ENCODE measurements at regions of chr11 and their contacts with region 1.

Region 1: DNA sequence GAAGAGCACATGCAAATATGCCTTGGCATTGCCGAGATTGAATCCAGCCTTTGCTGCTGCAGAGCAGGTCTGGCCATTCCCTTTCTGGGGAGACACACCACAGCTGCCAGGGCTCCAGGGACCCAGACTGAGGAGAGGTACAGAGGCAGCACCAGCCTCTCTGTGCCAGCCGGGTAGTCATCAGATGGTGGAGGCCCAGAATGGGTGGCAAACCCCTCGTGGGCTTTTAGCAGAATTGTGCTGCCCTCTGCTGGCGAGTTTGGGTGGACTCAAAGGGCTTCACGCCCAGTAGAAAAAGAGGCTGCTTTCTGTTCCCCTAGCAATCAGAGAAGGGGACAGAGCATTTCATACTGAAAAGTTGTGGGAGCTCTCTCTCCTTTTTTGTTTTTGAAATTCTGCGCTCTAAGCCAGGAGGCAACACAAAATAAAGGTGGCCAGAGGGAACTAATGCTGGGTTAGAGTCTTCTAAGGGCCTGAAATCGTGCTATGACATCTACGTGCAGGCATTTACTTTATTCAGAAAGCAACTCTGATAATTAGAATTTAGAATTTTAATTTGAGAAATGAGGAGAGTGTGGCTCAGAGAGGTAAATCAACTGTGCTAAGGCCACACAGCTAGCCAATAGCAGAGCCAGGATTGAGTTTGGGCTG is 158.8 kb upstream of the NAV2 start:
- DNase-seq: peak; percentile 88
- H3K4me3 ChIP-seq: no peak overlapping the region
- H3K27ac ChIP-seq: no peak overlapping the region
- H3K4me1 ChIP-seq: no peaks in the 10 kb centered on the region
- H3K27me3 ChIP-seq: no peaks in the 10 kb centered on the region
- CTCF ChIP-seq: peak; percentile 80 to 84 (median 84)
- POLR2A ChIP-seq: no peak

Region 2: GRCh38 chr11:19071255-19071654 is 482.6 kb before region 1 on chr11:
- intact Hi-C with region 1: loop called (anchors 10 kb)
- DNase-seq: peak; percentile 79
- H3K4me3 ChIP-seq: no peak overlapping the region
- H3K27ac ChIP-seq: no peak overlapping the region
- H3K4me1 ChIP-seq: no peaks in the 10 kb centered on the region
- H3K27me3 ChIP-seq: no peaks in the 10 kb centered on the region
- CTCF ChIP-seq: peak; percentile 83 to 88 (median 85)
- POLR2A ChIP-seq: no peak

Region 3: DNA sequence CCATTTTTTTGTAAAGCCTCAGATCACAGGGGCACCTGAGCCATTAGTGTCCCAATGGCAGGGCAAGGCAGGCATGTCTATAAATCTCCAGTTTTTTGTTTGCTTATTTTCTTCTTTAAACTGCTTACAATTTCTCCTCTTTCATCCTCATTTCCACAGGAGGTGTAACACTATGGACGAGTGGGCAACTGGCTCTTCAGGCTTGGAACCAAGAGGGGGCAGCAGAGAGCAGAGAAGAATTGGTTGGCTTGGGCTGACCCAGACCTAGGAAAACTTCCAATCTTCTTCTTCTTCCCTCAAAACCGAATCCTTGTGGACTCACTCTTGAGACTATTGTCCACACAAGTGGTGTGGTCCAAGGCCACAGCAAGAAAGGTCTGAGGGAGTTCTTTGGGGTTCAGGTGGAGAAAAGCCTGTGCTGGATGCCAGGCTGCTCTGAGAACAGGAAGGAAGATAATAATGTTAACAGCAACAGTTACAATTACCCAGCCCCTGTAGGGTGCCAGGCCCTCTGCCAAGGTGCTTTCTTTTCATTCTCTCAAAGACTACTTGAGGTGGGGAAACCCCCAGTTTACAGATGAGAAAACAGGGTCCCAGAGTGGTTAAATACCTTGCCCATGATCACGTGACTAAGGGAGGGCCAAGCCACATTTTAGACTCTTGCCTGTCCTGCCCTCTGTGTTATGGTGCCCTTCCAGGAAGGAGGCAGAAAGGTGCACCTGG is 242.3 kb before region 1 on chr11:
- intact Hi-C with region 1: loop called (anchors 10 kb)
- DNase-seq: peak; percentile 87
- H3K4me3 ChIP-seq: no peak overlapping the region
- H3K27ac ChIP-seq: no peak overlapping the region
- H3K4me1 ChIP-seq: no peaks in the 10 kb centered on the region
- H3K27me3 ChIP-seq: no peaks in the 10 kb centered on the region
- CTCF ChIP-seq: peak; percentile 61 to 84 (median 75)
- POLR2A ChIP-seq: no peak

Region 4: DNA sequence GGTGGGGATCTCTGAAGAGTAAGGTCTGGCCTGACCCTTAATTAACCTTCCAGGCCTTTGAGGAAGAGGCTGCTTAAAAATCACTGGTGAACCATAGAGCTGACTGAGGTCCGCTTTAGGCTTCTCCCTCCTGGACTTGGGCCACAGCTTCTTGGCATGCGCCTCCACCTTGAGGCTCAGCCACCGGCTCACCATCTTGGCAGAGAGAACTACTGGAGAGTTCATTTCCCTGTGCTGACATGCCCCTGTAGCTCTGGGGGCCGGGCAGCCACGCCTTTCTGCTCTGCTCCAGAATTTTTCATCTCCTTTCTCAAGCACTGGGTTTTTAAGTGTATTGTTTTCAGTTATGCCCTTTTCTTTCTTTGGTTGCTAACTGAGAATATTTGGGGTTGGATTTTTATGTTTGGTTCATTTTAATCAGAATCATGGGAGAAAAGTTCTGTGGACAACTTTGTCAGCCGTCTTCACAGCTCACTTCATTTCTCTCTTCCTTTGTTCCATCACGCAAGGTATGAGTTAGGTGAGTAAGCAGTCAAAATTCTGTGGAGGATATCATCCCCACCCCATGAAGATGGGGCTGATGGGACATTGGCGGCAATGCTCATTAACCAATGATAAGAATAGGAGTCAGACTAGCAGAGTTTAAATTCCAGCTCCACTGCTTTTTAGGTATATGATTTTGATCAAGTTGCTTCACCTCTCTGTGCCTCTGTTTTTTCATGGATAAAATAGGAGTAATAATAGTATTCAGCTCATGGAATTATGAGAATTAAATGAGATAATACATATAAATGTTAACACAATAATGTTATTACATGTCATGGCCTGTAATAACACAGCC is 502.5 kb after region 1 on chr11:
- intact Hi-C with region 1: no loop called
- DNase-seq: no peak
- H3K4me3 ChIP-seq: no peak overlapping the region
- H3K27ac ChIP-seq: no peak overlapping the region
- H3K4me1 ChIP-seq: no peaks in the 10 kb centered on the region
- H3K27me3 ChIP-seq: no peaks in the 10 kb centered on the region
- CTCF ChIP-seq: no peak
- POLR2A ChIP-seq: no peak

Measured in testis (tissue), 5 donors.